Naive thymus-derived CD4-positive, alpha-beta T cell (primary cell): ENCODE measurements at regions of chr2 and their contacts with region 1.

Region 1: GRCh38 chr2:86105252-86105968 is at the start of gene POLR1A:
- DNase-seq: peak; percentile 61 to 91 (median 89)
- ATAC-seq: peak; percentile 86
- H3K4me3 ChIP-seq: peak within 1 kb of the TSS; percentile 95
- H3K4me3 Mint-ChIP-seq: peak within 1 kb of the TSS; percentile 90 to 97 (median 92)
- H3K27ac ChIP-seq: peak within 1 kb of the TSS; percentile 86
- H3K27ac Mint-ChIP-seq: peak within 1 kb of the TSS; percentile 95 to 100 (median 99)
- H3K4me1 ChIP-seq: peaks cover 20 to 28% of the 10 kb centered on the region in 2 donors
- H3K4me1 Mint-ChIP-seq: peaks cover 37 to 86% (median 76%) of the 10 kb centered on the region in 7 donors
- H3K27me3 ChIP-seq: no peaks in the 10 kb centered on the region
- H3K27me3 Mint-ChIP-seq: no peaks in the 10 kb centered on the region
- total RNA-seq, gene POLR1A: 18.8 to 44.4 (median 21.7) TPM

Region 2: GRCh38 chr2:85409845-85410583 is 695.4 kb before region 1 on chr2 and contains the start of gene CAPG:
- CTCF ChIA-PET with region 1: no interaction called
- POLR2A ChIA-PET with region 1: no interaction called
- intact Hi-C with region 1: no loop called
- DNase-seq: peak in 3 of 9 donors; percentile 27 to 59 (median 29)
- ATAC-seq: peak; percentile 60
- H3K4me3 ChIP-seq: peak within 1 kb of the TSS; percentile 63
- H3K4me3 Mint-ChIP-seq: peak within 1 kb of the TSS; percentile 66 to 94 (median 78)
- H3K27ac ChIP-seq: peak within 1 kb of the TSS; percentile 41
- H3K27ac Mint-ChIP-seq: peak within 1 kb of the TSS; percentile 33 to 81 (median 76)
- H3K4me1 ChIP-seq: peaks cover 30 to 55% of the 10 kb centered on the region in 2 donors
- H3K4me1 Mint-ChIP-seq: peaks cover 32 to 78% (median 56%) of the 10 kb centered on the region in 7 donors
- H3K27me3 ChIP-seq: no peaks in the 10 kb centered on the region
- H3K27me3 Mint-ChIP-seq: peaks cover 0 to 15% (median 0%) of the 10 kb centered on the region in 5 donors
- total RNA-seq, gene CAPG: 12.9 to 265 (median 29.7) TPM

Region 3: GRCh38 chr2:85611705-85612587 is 493.5 kb before region 1 on chr2 and contains the start of gene C2orf68:
- CTCF ChIA-PET with region 1: no interaction called
- POLR2A ChIA-PET with region 1: interaction called, 6 read pairs
- intact Hi-C with region 1: loop called (anchors 5 to 10 kb)
- DNase-seq: peak; percentile 61 to 92 (median 75)
- ATAC-seq: peak; percentile 76
- H3K4me3 ChIP-seq: peak within 1 kb of the TSS; percentile 65
- H3K4me3 Mint-ChIP-seq: peak within 1 kb of the TSS; percentile 96 to 100 (median 98)
- H3K27ac ChIP-seq: peak within 1 kb of the TSS; percentile 81
- H3K27ac Mint-ChIP-seq: peak within 1 kb of the TSS; percentile 86 to 99 (median 96)
- H3K4me1 ChIP-seq: peaks cover 11 to 16% of the 10 kb centered on the region in 2 donors
- H3K4me1 Mint-ChIP-seq: peaks cover 14 to 52% (median 44%) of the 10 kb centered on the region in 7 donors
- H3K27me3 ChIP-seq: no peaks in the 10 kb centered on the region
- H3K27me3 Mint-ChIP-seq: no peaks in the 10 kb centered on the region
- total RNA-seq, gene C2orf68: 40.9 to 92.1 (median 51.6) TPM

Region 4: DNA sequence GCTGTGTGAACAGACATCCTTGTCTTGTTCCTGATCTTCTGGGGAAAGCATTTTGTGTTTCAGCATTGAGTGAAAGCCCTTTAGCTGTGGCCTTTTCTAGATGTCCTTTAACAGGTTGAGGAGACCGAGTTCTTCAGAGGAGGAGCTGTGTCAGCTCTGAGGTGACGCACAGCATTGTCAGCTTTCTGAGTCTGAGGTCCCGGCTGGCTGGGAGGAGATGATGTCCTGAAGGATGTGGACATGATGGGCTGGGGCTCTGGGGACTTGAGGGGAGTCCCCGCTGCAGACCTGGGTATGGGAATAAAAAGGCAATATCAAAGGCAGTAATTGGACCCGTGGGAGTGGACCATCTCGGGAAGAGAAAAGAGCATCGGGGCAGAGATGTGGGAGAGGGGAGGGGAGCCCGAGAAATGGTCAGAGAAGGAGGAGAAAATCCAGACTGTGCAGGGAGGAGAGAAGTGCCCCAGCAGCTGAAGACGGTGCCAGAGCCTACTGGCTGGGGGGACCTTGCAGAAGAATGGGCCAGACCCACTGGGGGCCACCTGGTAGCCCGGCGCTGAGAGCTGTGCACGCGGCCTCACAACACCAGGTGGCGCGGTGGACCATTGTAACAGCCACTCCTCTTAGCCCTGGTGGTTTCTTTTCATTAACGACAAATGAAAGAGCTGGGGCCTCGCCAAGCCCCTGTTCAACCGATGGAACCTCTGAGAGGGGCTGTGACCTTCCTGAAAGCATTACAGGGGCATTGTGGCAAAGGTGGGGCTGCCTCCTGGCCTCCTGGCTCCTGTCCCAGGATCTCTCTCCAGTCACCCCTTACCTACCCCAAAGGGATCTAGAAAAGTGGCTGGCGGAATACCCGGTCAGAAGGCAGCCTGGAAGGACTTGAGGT is 278.2 kb before region 1 on chr2:
- CTCF ChIA-PET with region 1: interaction called, 3 read pairs
- POLR2A ChIA-PET with region 1: no interaction called
- intact Hi-C with region 1: loop called in 1 of 2 experiments (anchors 1 kb)
- DNase-seq: peak; percentile 64 to 83 (median 79)
- ATAC-seq: peak; percentile 99
- H3K4me3 ChIP-seq: peak overlapping the region; percentile 49
- H3K4me3 Mint-ChIP-seq: peak overlapping the region in 7 of 10 donors; percentile 8 to 65 (median 55)
- H3K27ac ChIP-seq: no peak overlapping the region
- H3K27ac Mint-ChIP-seq: peak overlapping the region in 8 of 9 donors; percentile 7 to 70 (median 63)
- H3K4me1 ChIP-seq: peaks cover 4 to 5% of the 10 kb centered on the region in 2 donors
- H3K4me1 Mint-ChIP-seq: peaks cover 18 to 31% (median 25%) of the 10 kb centered on the region in 7 donors
- H3K27me3 ChIP-seq: no peaks in the 10 kb centered on the region
- H3K27me3 Mint-ChIP-seq: peaks cover 0 to 31% (median 0%) of the 10 kb centered on the region in 5 donors

Region 5: GRCh38 chr2:86035883-86036668 is 69.3 kb before region 1 on chr2:
- CTCF ChIA-PET with region 1: no interaction called
- POLR2A ChIA-PET with region 1: interaction called, 6 read pairs
- intact Hi-C with region 1: loop called (anchors 1 to 2 kb)
- DNase-seq: peak in 8 of 9 donors; percentile 63 to 89 (median 84)
- ATAC-seq: peak; percentile 65
- H3K4me3 ChIP-seq: peak overlapping the region; percentile 48
- H3K4me3 Mint-ChIP-seq: peak overlapping the region; percentile 80 to 88 (median 86)
- H3K27ac ChIP-seq: peak overlapping the region; percentile 88
- H3K27ac Mint-ChIP-seq: peak overlapping the region; percentile 94 to 100 (median 100)
- H3K4me1 ChIP-seq: peaks cover 55 to 84% of the 10 kb centered on the region in 2 donors
- H3K4me1 Mint-ChIP-seq: peaks cover 57 to 92% (median 88%) of the 10 kb centered on the region in 7 donors
- H3K27me3 ChIP-seq: no peaks in the 10 kb centered on the region
- H3K27me3 Mint-ChIP-seq: peaks cover 0 to 5% (median 0%) of the 10 kb centered on the region in 5 donors

Region 6: GRCh38 chr2:86201671-86202335 is 96.4 kb after region 1 on chr2:
- CTCF ChIA-PET with region 1: interaction called, 8 read pairs
- POLR2A ChIA-PET with region 1: interaction called, 3 read pairs
- intact Hi-C with region 1: loop called (anchors 1 kb)
- DNase-seq: no peak
- ATAC-seq: no peak
- H3K4me3 ChIP-seq: no peak overlapping the region
- H3K4me3 Mint-ChIP-seq: peak overlapping the region in 8 of 10 donors; percentile 27 to 95 (median 46)
- H3K27ac ChIP-seq: no peak overlapping the region
- H3K27ac Mint-ChIP-seq: peak overlapping the region in 5 of 9 donors; percentile 6 to 82 (median 55)
- H3K4me1 ChIP-seq: peaks cover 0 to 4% of the 10 kb centered on the region in 2 donors
- H3K4me1 Mint-ChIP-seq: peaks cover 22 to 58% (median 45%) of the 10 kb centered on the region in 7 donors
- H3K27me3 ChIP-seq: no peaks in the 10 kb centered on the region
- H3K27me3 Mint-ChIP-seq: no peaks in the 10 kb centered on the region

Region 7: DNA sequence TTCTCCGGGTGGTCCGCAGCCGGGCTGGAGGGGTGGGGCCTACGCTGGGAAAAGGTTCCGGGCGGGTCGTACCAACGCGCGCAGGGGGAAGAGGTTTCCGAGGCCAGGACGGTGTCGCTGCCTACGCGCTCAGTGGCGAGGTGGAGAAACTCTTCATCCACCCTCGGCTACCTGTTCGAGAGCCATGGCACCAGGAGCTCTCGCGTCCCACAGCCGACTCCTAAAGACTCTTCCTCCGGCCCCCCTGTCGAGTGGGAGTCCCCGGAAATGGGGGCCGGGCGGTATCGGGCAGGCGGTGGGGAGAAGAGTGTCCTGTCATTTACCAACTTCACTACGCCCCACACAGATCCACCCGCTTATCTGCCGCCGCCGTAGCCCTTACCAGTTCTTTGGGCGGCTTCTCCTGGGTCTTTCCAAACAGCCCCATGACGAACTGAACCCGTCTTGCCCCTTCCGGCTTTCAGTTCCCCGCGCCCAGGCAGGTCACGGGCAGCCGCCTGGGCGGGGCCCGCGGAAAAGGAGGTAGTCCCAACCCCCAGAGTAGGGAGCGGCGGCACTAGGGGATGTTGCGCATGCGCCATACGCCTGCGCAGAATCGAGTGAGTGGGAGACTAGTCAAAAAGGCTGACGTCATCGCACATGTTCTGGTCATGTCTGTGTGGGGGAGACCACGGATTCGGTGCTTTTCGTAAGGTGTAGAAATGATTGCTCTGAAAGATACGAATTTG is 457.7 kb after region 1 on chr2 and contains the start of gene CHMP3:
- CTCF ChIA-PET with region 1: no interaction called
- POLR2A ChIA-PET with region 1: no interaction called
- intact Hi-C with region 1: loop called in 1 of 2 experiments (anchors 5 kb)
- DNase-seq: peak; percentile 95 to 98 (median 96)
- ATAC-seq: peak; percentile 94
- H3K4me3 ChIP-seq: peak within 1 kb of the TSS; percentile 72
- H3K4me3 Mint-ChIP-seq: peak within 1 kb of the TSS in 9 of 10 donors; percentile 95 to 99 (median 97)
- H3K27ac ChIP-seq: peak within 1 kb of the TSS; percentile 99
- H3K27ac Mint-ChIP-seq: peak within 1 kb of the TSS; percentile 96 to 100 (median 98)
- H3K4me1 ChIP-seq: peaks cover 11 to 25% of the 10 kb centered on the region in 2 donors
- H3K4me1 Mint-ChIP-seq: peaks cover 11 to 42% (median 29%) of the 10 kb centered on the region in 7 donors
- H3K27me3 ChIP-seq: no peaks in the 10 kb centered on the region
- H3K27me3 Mint-ChIP-seq: peaks cover 0 to 7% (median 0%) of the 10 kb centered on the region in 5 donors
- total RNA-seq, gene CHMP3: 39.9 to 103 (median 71.4) TPM